ENCODE measurements at regions of chrX and their contacts with region 1.

Region 1: DNA sequence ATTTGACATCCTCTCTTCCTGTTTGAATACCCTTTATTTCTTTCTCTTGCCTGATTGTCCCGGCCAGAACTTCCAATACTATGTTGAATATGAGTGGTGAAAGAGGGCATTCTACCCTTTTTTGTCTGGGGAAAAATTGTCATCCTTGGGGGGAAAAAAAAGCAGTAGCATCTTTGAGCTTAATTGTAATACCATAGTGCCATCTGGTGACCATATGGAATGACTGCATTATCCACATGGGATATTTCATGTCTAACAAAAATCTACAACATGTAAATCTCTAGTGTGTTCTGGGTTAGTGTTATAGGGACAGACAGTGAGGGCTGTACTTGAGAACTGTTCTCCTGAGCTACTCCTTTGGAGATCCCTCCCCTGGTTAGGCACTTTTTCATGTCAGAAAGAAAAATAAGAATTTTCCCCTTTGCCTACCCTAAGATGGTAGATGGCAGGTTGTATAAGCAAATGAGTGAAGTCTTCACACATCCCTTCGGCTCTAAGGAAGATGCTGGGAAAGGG is 26.0 kb downstream of the CAPN6 start:
- DNase-seq: no peak
- H3K4me3 ChIP-seq: no peak overlapping the region
- H3K27ac ChIP-seq: no peak overlapping the region
- H3K27me3 ChIP-seq: peaks cover 0 to 80% (median 17%) of the 10 kb centered on the region in 45 donors
- CTCF ChIP-seq: peak in 55 of 56 donors; percentile 19 to 74 (median 54)

Region 2: DNA sequence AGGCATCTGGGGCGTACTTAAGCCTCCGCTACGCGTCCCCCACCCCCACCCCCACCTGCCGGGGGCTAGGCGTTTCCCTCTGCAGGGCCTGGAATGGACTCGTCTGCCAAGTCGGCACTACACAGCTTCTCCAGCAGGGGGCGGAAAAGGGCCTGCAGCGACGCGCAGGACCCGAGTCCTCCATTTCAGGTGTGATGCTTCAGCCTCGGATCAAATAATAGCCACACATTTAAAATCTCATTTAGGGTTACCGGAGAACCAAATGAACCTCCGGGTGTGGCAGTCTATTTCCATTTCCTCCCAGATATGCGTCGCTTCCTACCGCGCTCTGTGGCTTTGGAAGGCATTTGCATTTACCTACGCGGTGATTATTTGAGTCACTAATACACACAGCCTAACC is 145.4 kb before region 1 on chrX:
- intact Hi-C with region 1: loop called in 1 of 2 experiments (anchors 10 kb)
- DNase-seq: peak in 6 of 10 donors; percentile 32 to 52 (median 43)
- H3K4me3 ChIP-seq: peak overlapping the region in 36 of 59 donors; percentile 6 to 68 (median 28)
- H3K27ac ChIP-seq: peak overlapping the region in 1 of 59 donors; percentile 51
- H3K27me3 ChIP-seq: peaks cover 0 to 87% (median 37%) of the 10 kb centered on the region in 45 donors
- CTCF ChIP-seq: peak; percentile 19 to 74 (median 60)

Region 3: GRCh38 chrX:111168314-111168713 is 76.0 kb before region 1 on chrX:
- intact Hi-C with region 1: loop called in 1 of 2 experiments (anchors 5 kb)
- DNase-seq: peak in 1 of 10 donors; percentile 24
- H3K4me3 ChIP-seq: no peak overlapping the region
- H3K27ac ChIP-seq: no peak overlapping the region
- H3K27me3 ChIP-seq: peaks cover 0 to 85% (median 18%) of the 10 kb centered on the region in 45 donors
- CTCF ChIP-seq: peak in 44 of 56 donors; percentile 10 to 63 (median 32)

Region 4: GRCh38 chrX:111309083-111309482 is 64.8 kb after region 1 on chrX:
- intact Hi-C with region 1: no loop called
- DNase-seq: no peak
- H3K4me3 ChIP-seq: no peak overlapping the region
- H3K27ac ChIP-seq: no peak overlapping the region
- H3K27me3 ChIP-seq: peaks cover 0 to 80% (median 16%) of the 10 kb centered on the region in 45 donors
- CTCF ChIP-seq: no peak

Region 5: DNA sequence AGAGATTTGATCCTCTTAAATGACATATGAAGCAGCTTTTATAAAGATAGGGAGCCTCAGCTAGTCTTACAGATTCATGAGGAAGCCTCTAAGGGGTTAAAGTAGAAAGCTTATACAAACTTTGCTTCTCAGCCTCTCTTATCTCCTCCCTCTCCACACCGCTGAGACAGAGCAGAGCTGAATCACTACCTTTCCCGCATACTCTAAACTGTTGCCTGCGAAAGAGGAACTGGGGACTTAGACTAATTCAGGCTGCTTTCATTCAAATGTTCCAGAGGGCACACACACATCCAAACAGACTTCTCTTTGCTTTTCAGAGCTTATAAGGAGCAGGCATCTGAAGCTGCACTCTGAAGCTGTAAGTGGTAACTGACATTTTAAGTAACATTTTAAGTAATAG is 267.2 kb after region 1 on chrX and contains the start of gene SERTM2:
- intact Hi-C with region 1: no loop called
- DNase-seq: no peak
- H3K4me3 ChIP-seq: no peak within 1 kb of the TSS
- H3K27ac ChIP-seq: no peak within 1 kb of the TSS
- H3K27me3 ChIP-seq: peaks cover 0 to 98% (median 42%) of the 10 kb centered on the region in 45 donors
- CTCF ChIP-seq: no peak
- total RNA-seq, gene SERTM2: 0.09 to 0.60 (median 0.11) TPM in 8 of 120 experiments, not detected in the others

Region 6: GRCh38 chrX:111896148-111896547 is 651.9 kb after region 1 on chrX:
- intact Hi-C with region 1: no loop called
- DNase-seq: no peak
- H3K4me3 ChIP-seq: no peak overlapping the region
- H3K27ac ChIP-seq: no peak overlapping the region
- H3K27me3 ChIP-seq: peaks cover 0 to 87% (median 32%) of the 10 kb centered on the region in 45 donors
- CTCF ChIP-seq: no peak